Gastrocnemius medialis (tissue), 4 donors: ENCODE measurements at regions of chr3 and their contacts with region 1.

Region 1: GRCh38 chr3:73586190-73586589 is 38.6 kb downstream of the PDZRN3 start:
- DNase-seq: peak; percentile 86 to 88
- ATAC-seq: peak; percentile 96 to 98
- H3K4me3 ChIP-seq: no peak overlapping the region
- H3K27ac ChIP-seq: peak overlapping the region; percentile 89 to 94 (median 90)
- H3K4me1 ChIP-seq: peaks cover 73 to 81% of the 10 kb centered on the region in 2 donors
- H3K27me3 ChIP-seq: no peaks in the 10 kb centered on the region
- CTCF ChIP-seq: no peak
- POLR2A ChIP-seq: peak; percentile 7 to 53

Region 2: GRCh38 chr3:73540969-73541740 is 45.0 kb before region 1 on chr3:
- in situ Hi-C with region 1: no loop called
- intact Hi-C with region 1: no loop called
- DNase-seq: no peak
- ATAC-seq: no peak
- H3K4me3 ChIP-seq: no peak overlapping the region
- H3K27ac ChIP-seq: no peak overlapping the region
- H3K4me1 ChIP-seq: peaks cover 34 to 43% of the 10 kb centered on the region in 2 donors
- H3K27me3 ChIP-seq: no peaks in the 10 kb centered on the region
- CTCF ChIP-seq: no peak
- POLR2A ChIP-seq: no peak

Region 3: DNA sequence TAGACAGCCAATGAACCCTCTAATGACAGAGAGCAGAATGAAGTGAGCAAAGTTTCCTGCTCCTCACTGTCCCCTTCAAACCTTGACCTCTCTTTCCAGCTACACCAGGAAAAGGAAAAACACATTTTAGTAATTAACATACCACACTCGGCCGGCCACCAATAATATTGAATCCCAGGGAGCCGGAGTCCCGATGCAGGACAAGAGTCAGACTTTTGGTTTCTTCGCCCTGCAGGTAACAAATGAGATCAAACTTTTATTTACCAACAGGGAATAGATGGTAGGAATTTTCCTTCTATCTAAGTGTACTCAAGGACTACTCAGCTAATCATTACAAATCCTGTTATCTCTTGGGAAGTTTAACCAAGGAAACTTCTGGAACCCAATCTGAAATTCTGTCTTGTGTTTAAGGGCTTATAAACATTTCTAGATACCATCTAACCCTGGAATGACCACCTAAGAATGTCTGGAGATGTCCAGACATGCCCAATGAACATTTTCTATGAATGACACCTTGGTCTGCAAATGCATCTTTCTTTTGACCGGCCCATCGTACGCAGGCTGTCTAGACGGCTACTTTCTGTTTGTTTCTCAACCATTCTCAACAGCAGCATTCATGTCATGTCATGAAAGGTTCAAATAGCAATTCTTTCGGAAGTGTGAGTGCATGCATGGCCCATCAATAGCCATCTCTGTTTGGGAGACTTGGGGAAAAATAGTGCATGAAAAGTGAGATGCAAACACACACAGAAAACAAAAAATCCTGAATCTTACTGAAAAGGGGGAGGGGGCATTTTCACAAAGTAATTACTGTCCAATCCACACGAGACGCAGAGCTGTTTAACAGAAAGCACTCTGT is 22.5 kb after region 1 on chr3:
- in situ Hi-C with region 1: no loop called
- intact Hi-C with region 1: loop called (anchors 2 kb)
- DNase-seq: no peak
- ATAC-seq: peak in 1 of 2 donors; percentile 18
- H3K4me3 ChIP-seq: peak overlapping the region in 2 of 4 donors; percentile 22 to 24
- H3K27ac ChIP-seq: peak overlapping the region; percentile 79 to 94 (median 86)
- H3K4me1 ChIP-seq: peaks cover 89 to 93% of the 10 kb centered on the region in 2 donors
- H3K27me3 ChIP-seq: no peaks in the 10 kb centered on the region
- CTCF ChIP-seq: no peak
- POLR2A ChIP-seq: no peak